Aorta (tissue), 5 donors: ENCODE measurements at regions of chr5 and their contacts with region 1.

Region 1: GRCh38 chr5:38809388-38810359 is 36.1 kb upstream of the OSMR start:
- DNase-seq: peak; percentile 85 to 88
- ATAC-seq: peak; percentile 87
- H3K4me3 ChIP-seq: no peak overlapping the region
- H3K27ac ChIP-seq: no peak overlapping the region
- H3K4me1 ChIP-seq: no peaks in the 10 kb centered on the region
- H3K27me3 ChIP-seq: no peaks in the 10 kb centered on the region

Region 2: GRCh38 chr5:38382898-38383297 is 426.8 kb before region 1 on chr5:
- intact Hi-C with region 1: loop called (anchors 5 to 10 kb)
- DNase-seq: peak; percentile 64 to 79
- ATAC-seq: peak; percentile 83
- H3K4me3 ChIP-seq: no peak overlapping the region
- H3K27ac ChIP-seq: no peak overlapping the region
- H3K4me1 ChIP-seq: peaks cover 0 to 2% of the 10 kb centered on the region in 2 donors
- H3K27me3 ChIP-seq: peaks cover 0 to 5% of the 10 kb centered on the region in 2 donors

Region 3: GRCh38 chr5:38639377-38640332 is 170.0 kb before region 1 on chr5:
- intact Hi-C with region 1: no loop called
- DNase-seq: no peak
- ATAC-seq: no peak
- H3K4me3 ChIP-seq: no peak overlapping the region
- H3K27ac ChIP-seq: no peak overlapping the region
- H3K4me1 ChIP-seq: no peaks in the 10 kb centered on the region
- H3K27me3 ChIP-seq: no peaks in the 10 kb centered on the region

Region 4: GRCh38 chr5:39437469-39437868 is 627.8 kb after region 1 on chr5:
- intact Hi-C with region 1: no loop called
- DNase-seq: no peak
- ATAC-seq: no peak
- H3K4me3 ChIP-seq: no peak overlapping the region
- H3K27ac ChIP-seq: no peak overlapping the region
- H3K4me1 ChIP-seq: no peaks in the 10 kb centered on the region
- H3K27me3 ChIP-seq: peaks cover 0 to 1% of the 10 kb centered on the region in 2 donors